ENCODE measurements at regions of chrX and their contacts with region 1.

Region 1: GRCh38 chrX:8653961-8654360 is 78.0 kb downstream of the ANOS1 start:
- DNase-seq: no peak
- ATAC-seq: no peak
- H3K4me3 ChIP-seq: no peak overlapping the region
- H3K27ac ChIP-seq: no peak overlapping the region
- H3K4me1 ChIP-seq: no peaks in the 10 kb centered on the region
- H3K27me3 ChIP-seq: no peaks in the 10 kb centered on the region
- CTCF ChIP-seq: no peak
- POLR2A ChIP-seq: no peak

Region 2: DNA sequence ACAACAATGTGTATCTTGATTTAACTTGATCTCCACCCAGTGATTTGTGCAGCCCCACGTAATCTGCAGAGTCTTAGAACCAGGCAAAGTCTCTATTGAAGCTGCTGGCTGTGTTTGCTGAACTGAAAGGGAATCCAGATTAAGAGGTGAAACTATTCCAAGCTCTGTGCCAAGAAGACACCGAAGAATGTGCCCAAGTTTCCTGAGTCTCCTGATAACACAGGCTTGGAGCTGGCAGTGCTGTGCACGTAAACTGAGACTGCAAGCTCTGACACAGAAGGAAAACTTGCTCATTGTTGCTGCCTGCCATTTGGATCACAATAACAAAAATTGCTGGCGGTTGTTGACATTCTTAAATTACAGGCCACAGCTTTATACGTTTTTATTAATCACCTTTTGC is 249.5 kb before region 1 on chrX:
- in situ Hi-C with region 1: no loop called
- intact Hi-C with region 1: no loop called
- DNase-seq: peak; percentile 15 to 21
- ATAC-seq: peak; percentile 75 to 95
- H3K4me3 ChIP-seq: peak overlapping the region in 1 of 4 donors; percentile 28
- H3K27ac ChIP-seq: peak overlapping the region in 3 of 4 donors; percentile 47 to 72 (median 48)
- H3K4me1 ChIP-seq: peaks cover 0 to 7% of the 10 kb centered on the region in 2 donors
- H3K27me3 ChIP-seq: no peaks in the 10 kb centered on the region
- CTCF ChIP-seq: no peak
- POLR2A ChIP-seq: no peak

Region 3: GRCh38 chrX:8607326-8607725 is 46.6 kb before region 1 on chrX:
- in situ Hi-C with region 1: no loop called
- intact Hi-C with region 1: loop called (anchors 10 kb)
- DNase-seq: peak; percentile 2 to 9
- ATAC-seq: peak; percentile 91 to 98
- H3K4me3 ChIP-seq: no peak overlapping the region
- H3K27ac ChIP-seq: peak overlapping the region in 1 of 4 donors; percentile 46
- H3K4me1 ChIP-seq: no peaks in the 10 kb centered on the region
- H3K27me3 ChIP-seq: no peaks in the 10 kb centered on the region
- CTCF ChIP-seq: no peak
- POLR2A ChIP-seq: no peak